Activated naive CD4-positive, alpha-beta T cell treated with anti-CD3 and anti-CD28 coated beads for 36 hours (primary cell): ENCODE measurements at regions of chr9 and their contacts with region 1.

Region 1: GRCh38 chr9:33076358-33077004 is at the start of gene SMU1:
- DNase-seq: peak; percentile 98
- H3K4me3 Mint-ChIP-seq: peak within 1 kb of the TSS; percentile 96
- H3K27ac Mint-ChIP-seq: peak within 1 kb of the TSS; percentile 97
- H3K4me1 Mint-ChIP-seq: peaks cover 50% of the 10 kb centered on the region
- H3K27me3 Mint-ChIP-seq: no peaks in the 10 kb centered on the region
- total RNA-seq, gene SMU1: 23.7 to 23.9 TPM

Region 2: DNA sequence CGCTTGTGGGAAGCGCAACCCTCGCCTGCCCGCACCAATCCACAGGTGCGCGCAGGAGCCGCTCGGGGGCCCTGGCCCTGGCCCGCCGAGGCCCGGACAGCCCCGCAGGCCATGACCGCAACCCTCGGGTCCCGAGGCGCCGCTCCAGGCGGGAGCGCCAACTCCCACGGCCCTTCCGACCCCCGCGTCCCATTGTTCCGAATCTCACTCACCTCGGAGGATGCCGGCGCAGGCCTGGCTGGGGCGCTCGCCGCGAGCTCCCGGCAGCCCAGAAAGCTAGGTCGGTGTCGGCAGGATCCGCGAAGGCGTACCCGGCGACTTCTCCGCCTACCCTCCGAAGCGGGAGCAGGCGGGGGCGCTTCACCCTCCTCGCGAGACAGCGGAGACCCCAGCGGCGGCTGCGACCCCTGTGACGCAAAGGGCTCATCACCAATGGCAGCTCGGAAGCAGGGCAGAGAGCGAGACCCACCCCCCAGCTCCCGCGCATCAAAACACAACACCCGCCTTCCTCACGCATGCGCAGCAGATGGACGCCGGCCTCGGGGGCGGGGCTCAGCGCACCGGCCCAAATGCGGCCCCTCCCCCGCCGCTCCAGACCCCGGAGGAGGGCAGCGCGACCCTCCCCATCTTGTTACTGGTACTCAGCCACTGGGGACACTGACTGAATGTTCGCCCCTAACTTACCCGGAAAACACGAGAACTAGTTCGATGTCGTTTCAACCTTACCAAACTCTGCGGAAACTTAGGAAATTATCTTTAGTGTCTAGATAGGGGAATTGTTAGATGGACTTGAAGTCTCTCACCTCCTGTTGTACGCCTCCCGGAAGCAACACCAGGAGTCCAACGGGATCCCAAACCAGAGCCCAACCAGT is 525.7 kb before region 1 on chr9:
- CTCF ChIA-PET with region 1: no interaction called
- intact Hi-C with region 1: loop called (anchors 1 kb)
- DNase-seq: peak; percentile 93
- H3K4me3 Mint-ChIP-seq: peak overlapping the region; percentile 95
- H3K27ac Mint-ChIP-seq: peak overlapping the region; percentile 99
- H3K4me1 Mint-ChIP-seq: peaks cover 43% of the 10 kb centered on the region
- H3K27me3 Mint-ChIP-seq: no peaks in the 10 kb centered on the region

Region 3: GRCh38 chr9:33049680-33050361 is 26.7 kb before region 1 on chr9:
- CTCF ChIA-PET with region 1: no interaction called
- intact Hi-C with region 1: loop called (anchors 1 kb)
- DNase-seq: no peak
- H3K4me3 Mint-ChIP-seq: no peak overlapping the region
- H3K27ac Mint-ChIP-seq: peak overlapping the region; percentile 26
- H3K4me1 Mint-ChIP-seq: peaks cover 15% of the 10 kb centered on the region
- H3K27me3 Mint-ChIP-seq: no peaks in the 10 kb centered on the region

Region 4: GRCh38 chr9:33159760-33160127 is 83.3 kb after region 1 on chr9:
- CTCF ChIA-PET with region 1: no interaction called
- intact Hi-C with region 1: loop called (anchors 1 kb)
- DNase-seq: peak; percentile 87
- H3K4me3 Mint-ChIP-seq: peak overlapping the region; percentile 64
- H3K27ac Mint-ChIP-seq: peak overlapping the region; percentile 97
- H3K4me1 Mint-ChIP-seq: peaks cover 92% of the 10 kb centered on the region
- H3K27me3 Mint-ChIP-seq: no peaks in the 10 kb centered on the region

Region 5: DNA sequence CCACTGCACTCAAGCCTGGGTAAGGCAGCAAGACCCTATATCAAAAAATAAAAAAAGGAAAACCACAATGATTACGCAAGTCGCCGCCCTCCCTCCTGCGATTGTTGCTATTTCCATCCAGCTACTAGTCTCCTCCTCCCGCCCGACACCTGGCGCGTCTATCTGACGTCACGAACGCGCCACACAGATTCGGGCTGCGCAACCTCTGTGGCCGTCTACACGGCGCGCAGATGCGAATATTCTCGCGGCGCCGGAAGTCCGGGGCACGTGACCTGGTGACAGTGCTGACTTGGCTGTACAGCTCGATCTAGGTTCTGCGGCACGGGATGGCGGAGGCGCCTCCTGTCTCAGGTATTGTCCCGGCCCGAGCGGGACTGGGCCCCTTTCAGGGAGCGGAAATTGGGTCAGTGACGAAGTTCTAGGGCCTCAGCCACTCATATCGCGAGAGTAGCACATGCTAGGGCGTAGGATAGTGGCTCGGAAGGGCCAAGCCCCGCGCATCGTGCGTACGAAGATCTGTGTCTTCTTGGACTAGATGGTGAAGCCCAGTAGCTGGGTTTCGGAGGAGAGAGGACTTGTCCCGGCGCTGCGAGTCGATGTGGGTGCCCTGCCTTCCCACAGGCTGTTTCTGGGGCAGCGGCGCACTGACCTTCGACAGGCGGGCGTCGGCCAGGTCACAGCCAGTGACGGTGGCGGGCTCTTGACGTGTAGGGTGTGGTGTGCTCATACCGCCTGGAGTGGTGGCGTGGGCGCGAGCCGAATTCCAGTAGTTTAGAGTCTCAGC is 214.0 kb after region 1 on chr9 and contains the start of gene NFX1:
- CTCF ChIA-PET with region 1: no interaction called
- intact Hi-C with region 1: loop called (anchors 1 kb)
- DNase-seq: peak; percentile 99
- H3K4me3 Mint-ChIP-seq: peak within 1 kb of the TSS; percentile 87
- H3K27ac Mint-ChIP-seq: peak within 1 kb of the TSS; percentile 99
- H3K4me1 Mint-ChIP-seq: peaks cover 55% of the 10 kb centered on the region
- H3K27me3 Mint-ChIP-seq: no peaks in the 10 kb centered on the region
- total RNA-seq, gene NFX1: 32.4 to 32.6 TPM

Region 6: GRCh38 chr9:33458444-33458843 is 382.0 kb after region 1 on chr9:
- CTCF ChIA-PET with region 1: no interaction called
- intact Hi-C with region 1: loop called (anchors 2 kb)
- DNase-seq: peak; percentile 76
- H3K4me3 Mint-ChIP-seq: no peak overlapping the region
- H3K27ac Mint-ChIP-seq: peak overlapping the region; percentile 90
- H3K4me1 Mint-ChIP-seq: peaks cover 54% of the 10 kb centered on the region
- H3K27me3 Mint-ChIP-seq: no peaks in the 10 kb centered on the region

Region 7: DNA sequence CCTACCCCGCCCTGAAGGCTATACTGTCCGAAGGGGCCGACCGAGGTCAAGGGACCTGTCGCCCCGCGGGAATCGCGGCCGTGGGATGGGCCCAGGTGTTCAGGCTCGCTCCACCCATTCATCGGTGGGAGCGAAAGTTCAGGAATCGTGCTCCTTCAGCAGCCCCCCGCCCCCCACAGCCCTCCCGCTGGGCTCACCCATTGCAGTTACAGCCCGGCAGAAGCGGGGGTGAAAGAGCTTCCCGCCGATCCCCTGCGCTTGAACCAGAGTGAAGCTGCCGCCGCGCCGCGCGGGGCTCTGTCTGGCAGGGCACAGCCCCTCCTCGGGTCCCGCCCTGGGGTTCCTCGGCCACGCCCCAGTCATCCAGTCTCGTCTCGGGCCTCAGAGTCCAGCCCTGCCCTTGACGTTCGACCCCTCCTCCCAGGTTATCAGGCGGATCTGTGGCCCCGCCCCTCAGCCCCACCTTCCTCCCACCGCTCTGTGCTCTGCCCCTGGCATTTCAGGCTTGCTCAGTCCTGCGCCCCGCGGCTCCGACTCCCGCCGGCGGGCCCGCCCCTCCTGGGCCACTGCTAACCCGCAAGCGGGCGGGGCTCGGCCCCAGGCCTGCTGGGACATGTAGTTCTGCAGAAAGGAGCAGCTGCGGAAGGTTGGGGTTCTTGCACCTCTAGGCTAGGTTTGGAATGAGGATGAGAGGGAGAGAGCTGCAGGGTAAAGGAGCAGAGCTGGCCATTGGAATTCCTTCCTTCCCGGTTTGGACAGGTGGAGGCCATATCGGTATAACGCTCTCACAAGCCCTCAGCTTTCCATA is 1300.3 kb after region 1 on chr9 and contains the start of gene MYORG:
- CTCF ChIA-PET with region 1: no interaction called
- intact Hi-C with region 1: no loop called
- DNase-seq: peak; percentile 97
- H3K4me3 Mint-ChIP-seq: peak within 1 kb of the TSS; percentile 80
- H3K27ac Mint-ChIP-seq: no peak within 1 kb of the TSS
- H3K4me1 Mint-ChIP-seq: peaks cover 30% of the 10 kb centered on the region
- H3K27me3 Mint-ChIP-seq: no peaks in the 10 kb centered on the region
- total RNA-seq, gene MYORG: 1.1 to 2.0 TPM